ENCODE measurements at regions of chr17 and their contacts with region 1.

Region 1: GRCh38 chr17:77429919-77430752 is 289.4 kb downstream of the SEC14L1 start:
- DNase-seq: peak; percentile 93
- H3K4me3 ChIP-seq: peak overlapping the region in 1 of 2 experiments; percentile 42; a peak in 1 of 4 replicates
- H3K27ac ChIP-seq: peak overlapping the region; percentile 78 to 97
- H3K4me1 ChIP-seq: peaks cover 82 to 87% of the 10 kb centered on the region in 2 experiments
- H3K27me3 ChIP-seq: no peaks in the 10 kb centered on the region
- CTCF ChIP-seq: peak; percentile 99
- EP300 ChIP-seq: peak; percentile 80 to 98
- RAD21 ChIP-seq: peak; percentile 98

Region 2: DNA sequence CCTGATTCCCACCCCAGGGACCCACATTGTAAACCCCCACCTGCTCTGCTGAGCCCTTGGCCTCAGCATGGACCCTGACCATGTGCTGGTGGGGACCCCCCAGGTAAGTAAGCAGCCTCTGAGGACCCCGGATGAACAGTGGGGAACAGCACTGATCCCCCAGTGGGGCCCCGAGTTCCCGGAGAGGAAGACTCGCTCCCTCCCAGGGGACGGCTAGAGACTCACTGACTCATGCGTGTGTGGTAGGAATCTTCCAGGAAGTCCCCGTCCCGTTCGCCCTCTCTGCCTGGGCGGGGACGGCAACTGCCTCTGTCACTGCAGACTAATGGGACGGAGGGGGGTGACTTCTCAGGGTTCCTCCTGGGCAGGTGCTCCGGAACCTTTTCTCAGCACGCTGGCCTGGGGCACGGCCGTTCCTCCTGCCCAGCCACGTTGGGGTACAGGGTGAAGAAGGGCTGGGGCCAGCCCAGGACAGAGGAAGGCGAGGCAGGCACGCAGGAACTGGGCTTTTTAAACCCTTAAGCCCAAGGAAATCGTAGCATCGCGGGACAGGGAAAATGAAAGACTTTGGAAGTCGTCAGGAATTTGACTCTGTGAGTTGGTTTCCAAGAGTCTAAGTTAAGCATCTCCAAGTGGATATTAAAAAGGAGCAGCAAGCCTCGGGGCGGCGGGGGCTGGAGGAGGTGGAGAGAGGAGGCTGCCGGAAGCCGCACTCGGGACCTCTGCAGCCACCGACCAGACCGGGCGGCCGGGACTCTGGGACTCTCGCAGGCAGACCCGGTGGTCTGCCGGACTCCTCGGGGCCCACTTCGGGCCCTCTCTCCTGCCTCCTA is 110.7 kb before region 1 on chr17:
- CTCF ChIA-PET with region 1: interaction called, 11 read pairs
- POLR2A ChIA-PET with region 1: no interaction called
- DNase-seq: peak; percentile 43
- H3K4me3 ChIP-seq: peak overlapping the region; percentile 12 to 53; a peak in 3 of 4 replicates
- H3K27ac ChIP-seq: peak overlapping the region; percentile 48 to 81
- H3K4me1 ChIP-seq: peaks cover 72 to 74% of the 10 kb centered on the region in 2 experiments
- H3K27me3 ChIP-seq: no peaks in the 10 kb centered on the region
- CTCF ChIP-seq: no peak
- EP300 ChIP-seq: peak in 1 of 2 experiments; percentile 58; a peak in 1 of 4 replicates
- RAD21 ChIP-seq: no peak

Region 3: DNA sequence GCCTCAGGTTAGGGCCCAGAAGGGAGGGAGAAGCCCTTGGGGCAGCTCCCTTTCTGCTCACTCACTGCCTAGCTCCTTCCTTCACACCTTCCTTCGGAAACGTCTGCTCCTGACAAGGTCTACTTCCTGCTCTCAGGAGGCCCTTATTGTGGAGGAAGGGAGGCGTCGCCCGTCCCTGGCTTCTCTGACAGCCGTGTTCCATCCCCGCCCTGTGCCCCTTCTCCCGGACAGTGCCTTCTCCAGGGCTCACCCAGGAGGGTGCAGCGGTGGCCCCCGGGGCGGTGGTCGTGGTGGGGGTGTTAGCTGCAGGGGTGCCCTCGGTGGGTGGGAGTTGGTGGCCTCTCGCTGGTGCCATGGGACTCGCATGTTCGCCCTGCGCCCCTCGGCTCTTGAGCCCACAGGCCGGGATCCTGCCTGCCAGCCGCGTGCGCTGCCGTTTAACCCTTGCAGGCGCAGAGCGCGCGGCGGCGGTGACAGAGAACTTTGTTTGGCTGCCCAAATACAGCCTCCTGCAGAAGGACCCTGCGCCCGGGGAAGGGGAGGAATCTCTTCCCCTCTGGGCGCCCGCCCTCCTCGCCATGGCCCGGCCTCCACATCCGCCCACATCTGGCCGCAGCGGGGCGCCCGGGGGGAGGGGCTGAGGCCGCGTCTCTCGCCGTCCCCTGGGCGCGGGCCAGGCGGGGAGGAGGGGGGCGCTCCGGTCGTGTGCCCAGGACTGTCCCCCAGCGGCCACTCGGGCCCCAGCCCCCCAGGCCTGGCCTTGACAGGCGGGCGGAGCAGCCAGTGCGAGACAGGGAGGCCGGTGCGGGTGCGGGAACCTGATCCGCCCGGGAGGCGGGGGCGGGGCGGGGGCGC is 57.5 kb before region 1 on chr17:
- CTCF ChIA-PET with region 1: interaction called, 133 read pairs
- POLR2A ChIA-PET with region 1: interaction called, 13 read pairs
- DNase-seq: peak; percentile 98
- H3K4me3 ChIP-seq: peak overlapping the region; percentile 88 to 95
- H3K27ac ChIP-seq: peak overlapping the region in 1 of 2 experiments; percentile 100; a peak in 2 of 4 replicates
- H3K4me1 ChIP-seq: peaks cover 31 to 64% of the 10 kb centered on the region in 2 experiments
- H3K27me3 ChIP-seq: no peaks in the 10 kb centered on the region
- CTCF ChIP-seq: no peak
- EP300 ChIP-seq: no peak
- RAD21 ChIP-seq: peak; percentile 28

Region 4: GRCh38 chr17:77444984-77445759 is 15.0 kb after region 1 on chr17:
- CTCF ChIA-PET with region 1: interaction called, 71 read pairs
- POLR2A ChIA-PET with region 1: interaction called, 5 read pairs
- DNase-seq: no peak
- H3K4me3 ChIP-seq: no peak overlapping the region
- H3K27ac ChIP-seq: peak overlapping the region in 1 of 2 experiments; percentile 5; a peak in 1 of 4 replicates
- H3K4me1 ChIP-seq: peaks cover 20 to 48% of the 10 kb centered on the region in 2 experiments
- H3K27me3 ChIP-seq: no peaks in the 10 kb centered on the region
- CTCF ChIP-seq: no peak
- EP300 ChIP-seq: no peak
- RAD21 ChIP-seq: no peak

Region 5: GRCh38 chr17:77471984-77472461 is 41.9 kb after region 1 on chr17:
- CTCF ChIA-PET with region 1: interaction called, 55 read pairs
- POLR2A ChIA-PET with region 1: interaction called, 4 read pairs
- DNase-seq: peak; percentile 67
- H3K4me3 ChIP-seq: no peak overlapping the region
- H3K27ac ChIP-seq: peak overlapping the region; percentile 52 to 74
- H3K4me1 ChIP-seq: peaks cover 69 to 70% of the 10 kb centered on the region in 2 experiments
- H3K27me3 ChIP-seq: no peaks in the 10 kb centered on the region
- CTCF ChIP-seq: no peak
- EP300 ChIP-seq: no peak
- RAD21 ChIP-seq: no peak